ENCODE measurements at regions of chr16 and their contacts with region 1.

Region 1: GRCh38 chr16:87636072-87636684 is 33.9 kb downstream of the JPH3 start:
- DNase-seq: peak; percentile 76
- ATAC-seq: peak; percentile 90
- H3K4me3 ChIP-seq: peak overlapping the region; percentile 44 to 56
- H3K27ac ChIP-seq: peak overlapping the region; percentile 16; the same call in 1 of the 2 replicates
- H3K4me1 ChIP-seq: peaks cover 10 to 18% of the 10 kb centered on the region in 2 experiments
- H3K27me3 ChIP-seq: peaks cover 19% of the 10 kb centered on the region
- CTCF ChIP-seq: peak; percentile 73 to 94 (median 83)
- POLR2A ChIP-seq: no peak
- RAD21 ChIP-seq: peak; percentile 97

Region 2: DNA sequence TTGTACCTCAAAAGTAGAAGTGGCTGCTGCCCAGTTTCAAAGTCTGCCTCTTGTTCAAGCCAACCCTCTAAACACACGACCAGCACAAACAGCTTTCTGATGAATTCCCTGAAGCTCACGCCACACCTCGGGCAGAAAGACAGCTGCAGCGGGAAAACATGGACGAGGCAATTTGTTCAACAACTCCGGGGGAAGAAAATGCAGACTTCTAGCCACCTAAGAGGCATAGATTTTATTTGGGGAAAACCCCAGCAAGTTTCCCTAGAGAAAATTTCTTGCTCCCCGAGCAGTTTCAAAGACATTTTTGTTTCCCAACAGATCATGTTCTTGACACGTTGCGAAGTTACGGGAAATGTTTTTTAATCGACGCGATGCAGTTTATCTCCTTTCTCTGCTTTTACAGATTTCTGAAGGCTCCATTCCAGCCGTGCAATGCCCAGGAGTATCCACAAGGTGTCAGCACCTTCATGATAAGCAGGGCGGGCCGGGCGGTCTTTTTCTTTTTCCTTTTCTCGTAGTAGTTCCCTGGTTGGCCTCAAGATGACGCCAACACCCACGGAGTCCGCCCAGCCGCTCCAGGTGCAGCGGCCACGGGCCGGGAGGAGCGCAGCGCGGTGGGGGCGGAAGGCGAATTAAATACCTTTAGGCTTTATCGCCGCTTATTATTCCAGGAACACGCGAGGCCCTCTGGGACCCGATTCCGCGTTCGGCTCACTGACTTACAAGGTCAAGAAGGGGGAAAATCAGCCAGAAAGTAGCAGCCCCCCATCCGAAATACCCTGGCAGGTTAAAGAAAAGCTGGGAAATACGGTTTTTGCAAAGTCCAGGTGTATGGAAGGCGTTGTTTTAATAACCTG is 1072.5 kb before region 1 on chr16:
- CTCF ChIA-PET with region 1: interaction called, 5 read pairs
- POLR2A ChIA-PET with region 1: no interaction called
- RAD21 ChIA-PET with region 1: no interaction called
- intact Hi-C with region 1: loop called (anchors 5 kb)
- DNase-seq: peak; percentile 92
- ATAC-seq: peak; percentile 92
- H3K4me3 ChIP-seq: peak overlapping the region; percentile 40 to 43
- H3K27ac ChIP-seq: no peak overlapping the region
- H3K4me1 ChIP-seq: peaks cover 9 to 14% of the 10 kb centered on the region in 2 experiments
- H3K27me3 ChIP-seq: no peaks in the 10 kb centered on the region
- CTCF ChIP-seq: peak; percentile 100
- POLR2A ChIP-seq: no peak
- RAD21 ChIP-seq: peak; percentile 100

Region 3: GRCh38 chr16:87316923-87317749 is 319.0 kb before region 1 on chr16 and contains the start of gene C16orf95:
- CTCF ChIA-PET with region 1: interaction called, 12 read pairs
- POLR2A ChIA-PET with region 1: no interaction called
- RAD21 ChIA-PET with region 1: interaction called in 1 of 2 experiments, 3 read pairs
- intact Hi-C with region 1: loop called (anchors 2 kb)
- DNase-seq: peak; percentile 92
- ATAC-seq: peak; percentile 88
- H3K4me3 ChIP-seq: peak within 1 kb of the TSS; percentile 73 to 99
- H3K27ac ChIP-seq: peak within 1 kb of the TSS; percentile 87
- H3K4me1 ChIP-seq: peaks cover 11 to 23% of the 10 kb centered on the region in 2 experiments; a peak in 3 of 4 replicates
- H3K27me3 ChIP-seq: no peaks in the 10 kb centered on the region
- CTCF ChIP-seq: peak in 2 of 3 experiments; percentile 75 to 78; a peak in 4 of 6 replicates
- POLR2A ChIP-seq: peak; percentile 92
- RAD21 ChIP-seq: no peak
- total RNA-seq, gene C16orf95: 12.2 TPM

Region 4: GRCh38 chr16:87407511-87408112 is 228.6 kb before region 1 on chr16:
- CTCF ChIA-PET with region 1: interaction called, 28 read pairs
- POLR2A ChIA-PET with region 1: no interaction called
- RAD21 ChIA-PET with region 1: interaction called in 1 of 2 experiments, 6 read pairs
- intact Hi-C with region 1: no loop called
- DNase-seq: peak; percentile 100
- ATAC-seq: peak; percentile 93
- H3K4me3 ChIP-seq: peak overlapping the region in 1 of 2 experiments; percentile 24; a peak in 2 of 4 replicates
- H3K27ac ChIP-seq: peak overlapping the region; percentile 12; the same call in 1 of the 2 replicates
- H3K4me1 ChIP-seq: peaks cover 24 to 42% of the 10 kb centered on the region in 2 experiments
- H3K27me3 ChIP-seq: no peaks in the 10 kb centered on the region
- CTCF ChIP-seq: no peak
- POLR2A ChIP-seq: no peak
- RAD21 ChIP-seq: peak; percentile 31; the same call in 1 of the 2 replicates

Region 5: DNA sequence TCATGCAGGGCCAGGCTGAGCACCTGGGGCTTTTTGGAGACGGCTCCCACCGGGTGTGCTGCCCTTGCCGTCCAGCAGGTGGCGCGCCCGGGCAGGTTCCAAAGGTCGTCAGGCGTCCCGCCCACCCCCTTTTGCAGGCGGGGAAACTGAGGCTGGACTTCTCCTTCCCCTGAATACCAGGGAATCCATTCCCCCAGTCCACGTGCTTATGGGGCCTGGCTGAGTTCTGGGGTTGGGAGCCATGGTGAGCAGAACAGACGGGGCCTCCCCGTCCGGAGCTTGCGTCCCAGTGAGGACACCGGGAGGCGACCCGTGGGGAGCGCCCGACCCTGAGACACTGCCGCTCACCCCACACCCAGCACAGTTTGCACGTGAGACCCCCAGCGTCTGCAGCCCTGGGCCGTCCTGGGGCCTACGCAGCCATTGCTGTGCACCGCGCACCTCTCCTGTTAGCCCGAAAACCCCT is 85.6 kb before region 1 on chr16:
- CTCF ChIA-PET with region 1: interaction called, 6 read pairs
- POLR2A ChIA-PET with region 1: no interaction called
- RAD21 ChIA-PET with region 1: interaction called in 1 of 2 experiments, 3 read pairs
- intact Hi-C with region 1: loop called (anchors 1 kb)
- DNase-seq: no peak
- ATAC-seq: peak; percentile 82
- H3K4me3 ChIP-seq: no peak overlapping the region
- H3K27ac ChIP-seq: no peak overlapping the region
- H3K4me1 ChIP-seq: peaks cover 2 to 10% of the 10 kb centered on the region in 2 experiments; a peak in 2 of 4 replicates
- H3K27me3 ChIP-seq: peaks cover 11% of the 10 kb centered on the region; the same call in 1 of the 2 replicates
- CTCF ChIP-seq: peak; percentile 76 to 99 (median 99)
- POLR2A ChIP-seq: no peak
- RAD21 ChIP-seq: peak; percentile 76

Region 6: GRCh38 chr16:87581833-87582203 is 54.4 kb before region 1 on chr16:
- CTCF ChIA-PET with region 1: interaction called, 11 read pairs
- POLR2A ChIA-PET with region 1: interaction called, 6 read pairs
- RAD21 ChIA-PET with region 1: interaction called, 3 to 4 read pairs
- intact Hi-C with region 1: no loop called
- DNase-seq: peak; percentile 51
- ATAC-seq: peak; percentile 66
- H3K4me3 ChIP-seq: no peak overlapping the region
- H3K27ac ChIP-seq: no peak overlapping the region
- H3K4me1 ChIP-seq: peaks cover 12 to 22% of the 10 kb centered on the region in 2 experiments
- H3K27me3 ChIP-seq: no peaks in the 10 kb centered on the region
- CTCF ChIP-seq: no peak
- POLR2A ChIP-seq: no peak
- RAD21 ChIP-seq: no peak